ENCODE measurements at regions of chr22 and their contacts with region 1.

Region 1: DNA sequence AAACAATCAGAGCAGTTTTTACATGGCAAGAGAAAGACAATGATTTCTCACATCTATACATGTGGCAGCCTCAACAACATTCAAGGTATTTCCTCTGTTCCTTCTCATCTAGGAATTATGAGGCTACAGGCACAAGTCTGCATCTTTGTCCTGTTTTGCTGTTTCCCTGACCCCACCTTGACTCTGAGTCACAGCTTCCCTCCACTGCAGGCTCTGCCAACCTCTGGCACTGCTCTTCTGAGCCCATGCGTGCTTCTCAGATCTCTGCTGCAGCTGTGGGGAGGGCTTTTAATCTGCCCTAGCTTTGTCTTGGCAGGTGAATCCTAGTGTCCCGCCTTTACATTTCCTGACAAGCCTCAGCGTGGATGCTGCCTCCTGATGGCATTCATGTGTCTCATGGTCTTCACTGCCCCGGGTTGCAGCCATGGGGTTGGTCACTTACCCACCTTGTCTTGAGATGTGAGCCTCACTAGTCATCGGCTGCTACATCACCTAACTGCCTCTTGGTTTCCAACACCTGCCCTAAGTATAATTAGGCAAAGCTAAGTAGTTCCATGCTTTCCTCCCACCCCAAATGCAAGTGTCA is 578.5 kb downstream of the TBC1D22A start:
- DNase-seq: no peak
- H3K4me3 ChIP-seq: no peak overlapping the region
- H3K27ac ChIP-seq: no peak overlapping the region
- H3K4me1 ChIP-seq: no peaks in the 10 kb centered on the region
- H3K27me3 ChIP-seq: peaks cover 0 to 34% of the 10 kb centered on the region in 2 donors
- CTCF ChIP-seq: no peak
- POLR2A ChIP-seq: no peak

Region 2: DNA sequence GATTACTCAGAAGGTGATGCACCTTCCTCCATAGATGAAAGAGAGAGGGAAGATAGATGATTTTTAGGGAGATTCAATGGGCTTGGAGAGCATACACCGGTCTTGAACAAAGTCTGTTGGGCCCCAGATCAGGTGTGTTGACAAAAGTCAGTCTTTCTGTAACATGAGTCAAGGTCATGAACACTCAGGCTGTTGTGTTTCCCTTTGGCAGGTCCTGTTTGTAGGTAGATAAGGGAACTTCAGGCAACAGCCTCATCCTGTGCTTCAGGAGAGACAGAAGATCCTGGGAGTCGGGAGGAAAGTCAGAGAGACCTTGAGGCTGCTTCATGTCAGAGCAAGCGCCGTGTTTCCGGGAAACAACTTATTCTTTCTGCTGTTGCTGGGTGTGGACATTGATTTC is 1783.7 kb after region 1 on chr22:
- intact Hi-C with region 1: loop called (anchors 5 kb)
- DNase-seq: no peak
- H3K4me3 ChIP-seq: no peak overlapping the region
- H3K27ac ChIP-seq: no peak overlapping the region
- H3K4me1 ChIP-seq: no peaks in the 10 kb centered on the region
- H3K27me3 ChIP-seq: peaks cover 0 to 8% of the 10 kb centered on the region in 2 donors
- CTCF ChIP-seq: no peak
- POLR2A ChIP-seq: no peak

Measured in breast epithelium (tissue), 4 donors.